GM13976 (cell line): ENCODE measurements at regions of chr5 and their contacts with region 1.

Region 1: GRCh38 chr5:14108170-14108996 is 34.8 kb upstream of the TRIO start:
- DNase-seq: peak; percentile 69
- CTCF ChIP-seq: peak; percentile 59

Region 2: GRCh38 chr5:12896086-12896485 is 1212.3 kb before region 1 on chr5:
- in situ Hi-C with region 1: no loop called
- DNase-seq: no peak
- CTCF ChIP-seq: no peak

Region 3: DNA sequence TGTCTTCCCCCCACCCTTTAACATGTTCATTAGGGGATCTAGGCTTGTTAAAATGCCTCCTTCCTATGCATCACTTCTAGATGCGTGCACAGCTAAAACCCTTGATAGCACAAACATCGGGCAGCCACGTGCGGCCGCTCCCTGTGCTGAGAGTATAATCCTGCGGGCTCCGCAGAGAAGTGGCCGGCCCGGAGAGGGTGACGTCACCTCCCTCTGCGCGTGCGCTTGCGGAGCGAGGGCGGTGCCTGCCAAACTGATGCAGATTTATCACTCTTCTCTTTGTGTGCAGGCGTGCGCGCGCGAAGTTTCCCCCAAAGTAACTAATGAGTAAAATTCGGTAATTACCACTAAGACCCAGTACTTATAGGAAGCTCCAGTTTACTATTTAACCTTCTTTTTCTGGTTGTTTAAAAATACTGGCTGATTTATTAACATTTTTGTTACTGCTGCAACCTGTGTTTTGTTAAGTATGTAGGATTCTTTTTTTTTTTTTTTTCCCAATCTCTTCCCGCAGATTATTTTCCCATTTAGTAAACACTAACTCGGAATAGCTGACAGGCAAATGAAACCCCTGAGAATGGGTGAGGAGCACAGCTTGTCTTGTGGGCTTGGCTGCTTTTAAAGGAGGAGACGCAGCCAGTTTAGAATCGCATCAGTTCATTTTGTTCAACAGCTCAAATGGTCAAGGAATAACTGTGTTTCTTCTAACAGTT is 156.4 kb after region 1 on chr5:
- in situ Hi-C with region 1: loop called (anchors 10 kb)
- DNase-seq: peak; percentile 83
- CTCF ChIP-seq: no peak